ENCODE measurements at regions of chr10 and their contacts with region 1.

Region 1: DNA sequence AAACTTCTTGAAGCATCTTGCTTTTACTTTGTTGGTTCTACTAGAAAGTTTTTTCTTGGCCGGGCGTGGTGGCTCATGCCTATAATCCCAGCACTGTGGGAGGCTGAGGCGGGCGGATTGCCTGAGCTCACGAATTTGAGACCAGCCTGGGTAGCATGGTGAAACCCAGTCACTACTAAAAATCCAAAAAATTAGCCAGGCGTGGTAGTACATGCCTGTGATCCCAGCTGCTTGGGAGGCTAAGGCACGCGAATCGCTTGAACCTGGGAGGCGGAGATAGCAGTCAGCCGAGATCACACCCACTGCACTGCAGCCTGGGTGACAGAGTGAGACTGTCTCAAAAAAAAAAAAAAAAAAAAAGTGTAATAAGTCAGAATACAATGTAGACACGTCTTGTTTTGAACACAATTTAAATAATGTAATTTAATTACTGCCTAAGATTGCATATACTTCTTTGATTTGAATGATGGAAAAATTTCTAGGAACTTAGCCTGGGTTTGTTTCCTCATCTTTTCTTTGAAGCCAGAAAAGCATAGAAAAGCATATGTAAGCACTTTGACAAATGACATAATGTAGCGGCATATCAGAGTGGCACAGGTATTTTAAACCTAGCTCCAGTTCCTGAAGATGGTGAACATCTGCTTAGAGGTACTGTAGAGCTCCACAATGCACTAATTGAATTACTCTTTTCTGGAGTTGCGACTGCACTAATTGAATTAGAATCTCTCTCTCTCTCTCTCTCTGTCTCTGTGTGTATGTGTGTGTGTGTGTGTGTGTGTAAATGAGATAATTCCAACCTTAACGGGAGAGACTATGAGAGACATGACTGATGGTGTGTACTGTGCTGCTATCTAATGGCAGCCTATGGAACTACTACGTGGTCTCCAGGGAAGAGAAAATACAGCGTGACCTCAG is 87.8 kb downstream of the BTRC start:
- DNase-seq: peak; percentile 62
- CTCF ChIP-seq: peak; percentile 38

Region 2: DNA sequence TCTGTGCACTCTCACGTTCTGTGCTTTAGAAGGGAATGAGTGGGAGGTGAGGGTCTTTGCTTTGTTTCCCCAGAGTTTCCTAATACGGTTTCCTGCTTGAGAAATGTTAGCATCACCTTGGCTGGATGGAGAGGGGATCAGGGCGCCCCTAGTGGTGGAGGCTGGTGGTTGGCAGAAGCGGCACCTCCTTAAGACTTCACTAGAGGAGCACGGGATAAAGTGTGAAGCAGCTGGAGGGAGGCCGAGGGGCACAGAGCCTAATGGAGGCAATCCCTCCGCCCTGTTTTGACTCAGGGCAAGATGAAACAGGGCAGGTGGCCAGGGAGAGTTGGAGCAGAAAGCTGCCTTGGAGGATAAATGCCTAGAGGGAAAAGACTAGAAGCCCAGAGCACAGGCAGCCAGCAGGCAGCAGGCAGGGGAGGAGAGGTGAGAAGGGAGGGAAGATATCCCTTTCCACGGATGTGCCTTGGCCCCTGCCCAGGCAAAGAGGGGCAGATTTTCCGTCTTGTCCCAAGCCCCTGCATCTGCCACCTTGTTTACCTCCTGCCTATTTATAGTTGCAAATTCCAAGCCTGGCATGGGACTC is 143.8 kb before region 1 on chr10:
- in situ Hi-C with region 1: loop called (anchors 25 kb)
- DNase-seq: peak; percentile 76
- CTCF ChIP-seq: peak; percentile 93

Region 3: GRCh38 chr10:101682172-101682825 is 240.5 kb after region 1 on chr10:
- in situ Hi-C with region 1: no loop called
- DNase-seq: peak; percentile 25
- CTCF ChIP-seq: no peak

Measured in GM13976 (cell line).